Heart right ventricle (tissue), 16 donors: ENCODE measurements at regions of chr5 and their contacts with region 1.

Region 1: DNA sequence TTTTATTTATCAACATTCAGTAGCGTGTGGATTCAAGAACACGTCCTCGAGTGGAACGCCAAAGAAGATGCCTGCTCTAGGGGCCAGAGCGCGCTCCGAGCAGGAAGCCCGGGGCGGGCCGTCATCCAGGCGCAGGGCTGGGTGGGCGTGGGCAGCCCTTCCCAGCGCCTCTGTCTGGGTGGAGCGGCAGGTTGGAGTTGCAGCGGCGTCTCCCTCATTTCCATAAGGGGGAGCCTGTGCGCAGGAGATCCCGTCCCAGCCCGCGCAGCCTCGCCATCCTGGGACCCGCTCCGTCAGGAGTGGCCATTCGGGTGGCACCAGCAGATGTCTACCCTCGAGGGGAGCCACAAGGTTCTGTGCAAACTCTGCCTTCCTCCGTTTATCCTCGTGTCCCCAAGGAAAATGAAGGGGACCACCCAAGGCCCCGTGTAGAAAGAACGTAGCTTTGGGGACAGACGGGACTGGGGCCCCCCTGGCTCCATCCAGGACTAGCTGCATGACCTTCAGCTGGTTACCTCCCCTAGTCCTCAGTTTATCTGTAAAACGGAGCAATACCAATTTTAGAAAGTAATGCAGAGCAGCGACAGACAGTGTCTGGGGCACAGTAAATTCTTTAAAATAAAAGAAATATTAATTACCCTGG is 155.5 kb upstream of the SMIM23 start:
- DNase-seq: peak; percentile 61 to 70
- ATAC-seq: peak; percentile 87 to 96 (median 92)
- H3K4me3 ChIP-seq: peak overlapping the region in 6 of 10 donors; percentile 4 to 34 (median 18)
- H3K27ac ChIP-seq: no peak overlapping the region
- H3K4me1 ChIP-seq: peaks cover 0 to 31% (median 13%) of the 10 kb centered on the region in 9 donors
- H3K27me3 ChIP-seq: peaks cover 0 to 4% (median 0%) of the 10 kb centered on the region in 7 donors
- CTCF ChIP-seq: peak; percentile 29 to 74 (median 54)

Region 2: GRCh38 chr5:171681677-171682076 is 51.5 kb after region 1 on chr5:
- intact Hi-C with region 1: no loop called
- DNase-seq: no peak
- ATAC-seq: peak in 4 of 8 donors; percentile 19 to 57 (median 31)
- H3K4me3 ChIP-seq: no peak overlapping the region
- H3K27ac ChIP-seq: no peak overlapping the region
- H3K4me1 ChIP-seq: peaks cover 0 to 13% (median 0%) of the 10 kb centered on the region in 9 donors
- H3K27me3 ChIP-seq: peaks cover 0 to 3% (median 0%) of the 10 kb centered on the region in 7 donors
- CTCF ChIP-seq: no peak

Region 3: DNA sequence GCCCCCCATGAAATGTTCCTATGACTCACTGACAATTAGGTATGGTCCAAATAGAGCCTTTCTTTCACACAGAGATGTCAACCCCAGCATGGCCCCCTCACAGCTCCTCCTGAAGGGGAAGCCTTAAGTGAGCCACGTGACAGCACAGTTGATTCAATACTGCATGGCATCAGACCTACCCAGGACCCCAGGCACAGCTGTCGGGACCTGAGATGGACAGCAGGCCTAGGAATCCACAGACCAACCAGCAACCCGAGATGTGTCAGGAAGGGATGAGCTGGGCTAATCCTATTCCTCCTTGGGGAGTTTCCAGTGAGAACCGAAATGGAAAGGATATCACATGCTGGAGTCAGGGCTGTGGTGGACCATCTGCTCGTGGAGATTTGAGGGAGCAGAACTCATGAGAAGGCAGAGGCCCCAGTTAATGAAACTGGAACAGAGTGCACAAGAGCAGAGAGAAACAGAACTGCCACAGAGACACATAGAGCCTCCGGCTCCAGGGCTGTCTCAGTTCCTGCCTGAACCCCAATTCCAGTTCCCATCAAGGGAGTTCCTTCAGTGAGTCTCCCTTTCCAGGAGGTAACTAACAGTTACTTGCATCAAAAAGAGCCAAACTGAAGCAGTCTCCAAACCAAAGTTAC is 113.4 kb after region 1 on chr5:
- intact Hi-C with region 1: loop called in 1 of 10 experiments (anchors 10 kb)
- DNase-seq: no peak
- ATAC-seq: no peak
- H3K4me3 ChIP-seq: no peak overlapping the region
- H3K27ac ChIP-seq: no peak overlapping the region
- H3K4me1 ChIP-seq: peaks cover 0 to 7% (median 0%) of the 10 kb centered on the region in 9 donors
- H3K27me3 ChIP-seq: no peaks in the 10 kb centered on the region
- CTCF ChIP-seq: no peak

Region 4: GRCh38 chr5:171840066-171840465 is 209.9 kb after region 1 on chr5:
- intact Hi-C with region 1: loop called in 8 of 10 experiments (anchors 2 to 10 kb)
- DNase-seq: no peak
- ATAC-seq: no peak
- H3K4me3 ChIP-seq: no peak overlapping the region
- H3K27ac ChIP-seq: no peak overlapping the region
- H3K4me1 ChIP-seq: peaks cover 0 to 20% (median 6%) of the 10 kb centered on the region in 9 donors
- H3K27me3 ChIP-seq: no peaks in the 10 kb centered on the region
- CTCF ChIP-seq: no peak

Region 5: DNA sequence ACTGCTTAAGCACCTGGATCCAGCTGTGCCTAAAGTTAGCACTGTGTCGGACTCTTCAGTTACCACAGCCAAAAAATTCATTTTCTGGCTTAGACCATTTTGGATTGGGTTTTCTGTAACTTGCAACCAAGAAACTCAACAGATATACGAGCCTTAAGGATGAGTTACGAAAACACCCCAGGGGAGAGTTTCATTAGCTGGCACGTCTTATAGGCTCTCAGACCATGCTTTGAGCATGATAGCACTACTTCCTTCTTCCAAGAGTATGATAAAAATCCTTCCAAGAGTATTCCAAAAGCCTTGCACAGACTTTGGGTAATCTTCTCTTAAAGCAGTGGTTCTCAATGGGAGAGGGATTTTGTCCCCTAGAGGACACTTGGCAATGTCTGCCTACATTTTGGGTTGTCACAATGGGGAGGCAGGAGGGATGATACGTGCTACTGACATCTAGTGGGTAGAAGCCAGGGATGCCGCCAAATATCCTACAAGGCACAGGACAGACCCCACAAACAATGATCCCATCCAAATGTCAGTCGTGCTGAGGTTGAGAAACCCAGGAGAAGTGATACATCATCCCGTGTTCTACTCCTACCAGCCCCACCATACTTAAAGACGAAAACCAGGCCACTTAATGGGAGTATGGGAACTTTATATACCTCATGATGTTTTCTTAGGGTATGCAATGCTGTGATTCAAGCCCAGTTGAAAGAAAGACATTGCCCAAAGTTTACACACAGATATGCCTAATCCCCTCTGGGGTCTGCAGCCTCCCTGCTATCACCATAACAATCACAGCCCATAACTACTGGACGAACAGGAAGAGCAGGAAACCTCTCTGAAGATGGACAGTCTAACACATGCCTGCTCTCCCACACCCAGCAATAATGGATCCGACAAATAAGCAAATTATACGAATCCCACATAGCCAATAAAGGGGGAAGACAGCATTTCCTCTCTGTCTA is 220.5 kb after region 1 on chr5:
- intact Hi-C with region 1: loop called in 6 of 10 experiments (anchors 5 to 10 kb)
- DNase-seq: no peak
- ATAC-seq: peak in 5 of 8 donors; percentile 10 to 46 (median 15)
- H3K4me3 ChIP-seq: no peak overlapping the region
- H3K27ac ChIP-seq: peak overlapping the region in 2 of 10 donors; percentile 29 to 35
- H3K4me1 ChIP-seq: peaks cover 0 to 22% (median 9%) of the 10 kb centered on the region in 9 donors
- H3K27me3 ChIP-seq: no peaks in the 10 kb centered on the region
- CTCF ChIP-seq: peak in 6 of 9 donors; percentile 17 to 42 (median 22)

Region 6: DNA sequence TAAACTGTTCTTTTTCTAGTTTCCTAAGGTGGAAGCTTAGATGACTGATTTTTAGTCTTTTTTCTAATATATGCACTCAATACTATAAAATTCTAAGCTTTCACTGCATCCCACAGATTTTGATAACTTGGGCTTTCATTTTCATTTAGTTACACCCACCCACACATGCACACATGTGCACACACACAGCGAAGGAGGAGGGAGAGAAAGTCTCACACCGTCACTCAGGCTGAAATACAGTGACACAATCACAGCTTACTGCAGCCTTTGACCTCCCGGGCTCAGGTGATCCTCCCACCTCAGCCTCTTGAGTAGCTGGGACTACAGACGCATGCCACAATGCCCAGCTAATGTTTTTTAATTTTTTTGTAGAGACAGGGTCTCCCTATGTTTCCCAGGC is 252.0 kb after region 1 on chr5:
- intact Hi-C with region 1: no loop called
- DNase-seq: no peak
- ATAC-seq: no peak
- H3K4me3 ChIP-seq: no peak overlapping the region
- H3K27ac ChIP-seq: no peak overlapping the region
- H3K4me1 ChIP-seq: peaks cover 0 to 6% (median 0%) of the 10 kb centered on the region in 9 donors
- H3K27me3 ChIP-seq: no peaks in the 10 kb centered on the region
- CTCF ChIP-seq: no peak

Region 7: GRCh38 chr5:171907725-171908343 is 277.7 kb after region 1 on chr5:
- intact Hi-C with region 1: loop called in 7 of 10 experiments (anchors 2 to 10 kb)
- DNase-seq: peak in 1 of 2 donors; percentile 47
- ATAC-seq: peak; percentile 47 to 83 (median 78)
- H3K4me3 ChIP-seq: no peak overlapping the region
- H3K27ac ChIP-seq: no peak overlapping the region
- H3K4me1 ChIP-seq: peaks cover 3 to 39% (median 30%) of the 10 kb centered on the region in 9 donors
- H3K27me3 ChIP-seq: no peaks in the 10 kb centered on the region
- CTCF ChIP-seq: peak; percentile 53 to 87 (median 81)